Thyroid gland (tissue), 4 donors: ENCODE measurements at regions of chr20 and their contacts with region 1.

Region 1: DNA sequence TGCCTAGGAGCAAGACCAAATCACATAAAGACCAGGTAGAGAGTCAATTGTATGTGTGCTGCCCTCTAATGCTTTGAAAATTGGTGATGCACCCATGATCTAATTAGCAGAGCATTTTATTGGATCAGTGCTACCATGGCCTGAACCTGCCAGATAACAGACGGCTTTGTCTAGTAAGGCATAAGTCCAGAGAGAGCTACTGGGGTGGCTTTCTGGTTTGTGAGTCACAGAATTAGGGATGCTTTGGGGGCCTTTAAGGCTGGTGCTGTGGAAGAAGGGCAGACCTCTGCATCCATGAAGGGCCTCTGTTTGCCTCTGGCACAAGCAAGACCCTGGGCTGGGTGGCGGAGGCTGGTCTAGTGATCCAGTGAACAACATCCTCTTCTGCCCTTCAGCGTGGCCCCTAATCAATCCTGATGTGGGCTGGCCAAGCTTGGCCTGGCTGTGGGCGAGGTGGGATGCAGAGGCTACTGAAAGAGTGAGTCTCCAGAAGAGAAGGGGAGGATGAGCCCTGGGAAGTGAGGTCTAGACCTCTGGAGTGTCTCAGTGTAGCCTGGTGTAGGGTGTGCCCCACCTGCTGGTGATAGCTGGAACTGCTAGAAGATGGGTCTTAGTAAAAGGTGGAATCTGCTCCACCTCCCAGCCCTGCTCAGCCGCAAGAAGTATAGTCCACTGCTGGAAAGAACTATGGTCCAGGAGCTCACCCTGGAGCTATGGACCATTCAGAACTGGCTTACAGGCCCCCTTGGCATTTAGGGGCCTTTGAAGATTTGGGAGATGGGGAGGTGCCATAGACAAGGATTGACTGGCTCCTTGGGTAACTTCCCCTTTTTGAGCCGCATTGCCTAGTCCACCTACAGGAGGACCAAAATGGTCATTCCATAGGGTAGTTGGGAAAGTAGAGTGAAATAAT is 36.7 kb upstream of the AAR2 start:
- DNase-seq: peak; percentile 86 to 88
- H3K4me3 ChIP-seq: no peak overlapping the region
- H3K27ac ChIP-seq: no peak overlapping the region
- H3K4me1 ChIP-seq: peaks cover 0 to 6% of the 10 kb centered on the region in 2 donors
- H3K27me3 ChIP-seq: no peaks in the 10 kb centered on the region
- CTCF ChIP-seq: peak; percentile 61 to 94 (median 84)
- POLR2A ChIP-seq: no peak

Region 2: GRCh38 chr20:36154700-36155628 is 44.6 kb before region 1 on chr20 and contains the start of gene EPB41L1:
- intact Hi-C with region 1: loop called (anchors 5 kb)
- DNase-seq: peak in 1 of 2 donors; percentile 31
- H3K4me3 ChIP-seq: peak within 1 kb of the TSS; percentile 54 to 64 (median 56)
- H3K27ac ChIP-seq: peak within 1 kb of the TSS; percentile 71 to 83 (median 73)
- H3K4me1 ChIP-seq: peaks cover 10 to 30% of the 10 kb centered on the region in 2 donors
- H3K27me3 ChIP-seq: no peaks in the 10 kb centered on the region
- CTCF ChIP-seq: no peak
- POLR2A ChIP-seq: no peak
- total RNA-seq, gene EPB41L1: 15.4 to 75.2 (median 42.3) TPM